Breast epithelium (tissue), 4 donors: ENCODE measurements at regions of chr4 and their contacts with region 1.

Region 1: GRCh38 chr4:7224001-7224400 is 31.7 kb downstream of the SORCS2 start:
- DNase-seq: no peak
- H3K4me3 ChIP-seq: no peak overlapping the region
- H3K27ac ChIP-seq: no peak overlapping the region
- H3K4me1 ChIP-seq: no peaks in the 10 kb centered on the region
- H3K27me3 ChIP-seq: no peaks in the 10 kb centered on the region
- CTCF ChIP-seq: no peak
- POLR2A ChIP-seq: no peak

Region 2: DNA sequence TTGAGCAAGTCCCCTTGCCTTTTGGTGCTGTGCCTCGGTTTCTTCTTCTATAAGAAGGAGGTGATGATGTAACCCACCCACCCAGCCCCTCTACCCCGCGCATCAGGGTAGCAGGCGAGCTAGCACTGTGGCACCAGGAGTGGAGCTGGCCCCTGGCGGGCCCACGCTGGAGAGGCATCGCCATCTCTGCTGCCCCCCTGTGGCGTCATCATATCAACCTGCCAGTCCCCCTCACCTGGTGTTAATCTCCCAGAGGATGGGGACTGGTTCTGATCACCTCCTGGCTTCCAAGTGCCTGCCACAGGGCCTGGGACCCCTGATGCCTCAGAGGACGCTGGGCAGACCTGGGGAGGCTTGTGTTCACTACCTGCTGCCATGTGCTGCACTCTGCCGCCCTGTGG is 37.9 kb before region 1 on chr4:
- intact Hi-C with region 1: loop called (anchors 2 kb)
- DNase-seq: peak in 1 of 2 donors; percentile 36
- H3K4me3 ChIP-seq: no peak overlapping the region
- H3K27ac ChIP-seq: no peak overlapping the region
- H3K4me1 ChIP-seq: no peaks in the 10 kb centered on the region
- H3K27me3 ChIP-seq: peaks cover 0 to 31% of the 10 kb centered on the region in 2 donors
- CTCF ChIP-seq: no peak
- POLR2A ChIP-seq: no peak